AG04450 (cell line): ENCODE measurements at regions of chr9 and their contacts with region 1.

Region 1: DNA sequence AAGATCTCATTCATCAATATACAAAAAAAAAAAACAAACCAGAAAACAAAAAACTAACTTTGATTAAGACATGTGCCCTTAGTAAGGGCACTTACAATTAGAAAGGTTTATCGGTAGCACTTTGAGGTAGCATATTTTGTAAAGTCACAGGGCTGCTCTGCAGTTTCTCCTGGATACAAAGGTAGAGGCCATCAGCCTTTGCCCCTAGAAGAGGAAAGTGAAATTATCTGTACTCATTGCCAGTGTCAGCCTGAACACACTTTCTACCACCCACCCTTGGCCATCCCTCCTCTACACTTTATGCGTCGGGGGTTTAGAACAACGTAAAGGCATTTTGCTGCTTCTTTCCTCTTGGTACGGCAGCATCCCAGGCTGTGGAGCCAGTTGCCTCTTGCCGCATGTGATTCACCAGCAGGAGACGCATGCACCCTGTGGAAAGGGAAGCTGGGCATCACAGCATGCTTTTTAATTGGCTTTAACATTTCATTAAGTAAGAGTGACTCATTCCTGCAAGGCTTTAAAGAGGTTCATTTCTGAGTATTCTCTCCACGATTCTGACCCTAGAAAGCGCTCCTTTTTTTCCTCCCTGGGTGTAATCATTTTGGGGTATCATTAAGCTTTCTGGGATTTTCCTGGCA is 84.6 kb downstream of the CEMIP2 start:
- DNase-seq: no peak
- H3K4me3 ChIP-seq: no peak overlapping the region
- H3K27ac ChIP-seq: no peak overlapping the region
- H3K27me3 ChIP-seq: no peaks in the 10 kb centered on the region
- CTCF ChIP-seq: peak; percentile 40

Region 2: DNA sequence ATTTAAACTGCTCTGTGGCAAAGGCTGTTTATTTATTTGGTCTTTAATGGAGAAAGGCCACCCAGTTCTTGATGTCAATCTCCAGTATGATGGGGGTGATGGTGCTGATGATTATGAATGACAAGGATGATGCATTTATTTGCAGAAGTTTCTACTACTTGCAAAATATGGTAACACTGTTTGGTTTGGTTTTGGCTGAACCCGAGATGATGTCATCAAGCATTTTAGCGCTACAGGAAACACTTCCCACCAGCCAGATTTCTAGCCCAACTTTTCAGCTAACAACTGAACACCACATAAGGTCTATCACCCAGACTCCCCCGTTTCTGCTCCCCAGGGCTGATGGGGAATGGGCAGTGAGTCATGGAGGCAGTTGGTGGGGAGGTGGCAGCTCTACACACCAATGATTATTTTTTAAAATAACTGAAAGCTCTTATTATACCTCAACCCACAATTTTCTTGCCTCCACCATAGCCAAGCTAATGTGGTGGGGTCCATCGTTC is 218.4 kb before region 1 on chr9:
- CTCF ChIA-PET with region 1: no interaction called
- POLR2A ChIA-PET with region 1: no interaction called
- DNase-seq: no peak
- H3K4me3 ChIP-seq: no peak overlapping the region
- H3K27ac ChIP-seq: no peak overlapping the region
- H3K27me3 ChIP-seq: no peaks in the 10 kb centered on the region
- CTCF ChIP-seq: no peak

Region 3: GRCh38 chr9:71571186-71571585 is 112.5 kb before region 1 on chr9:
- CTCF ChIA-PET with region 1: no interaction called
- POLR2A ChIA-PET with region 1: interaction called, 10 read pairs
- DNase-seq: no peak
- H3K4me3 ChIP-seq: no peak overlapping the region
- H3K27ac ChIP-seq: no peak overlapping the region
- H3K27me3 ChIP-seq: no peaks in the 10 kb centered on the region
- CTCF ChIP-seq: no peak

Region 4: DNA sequence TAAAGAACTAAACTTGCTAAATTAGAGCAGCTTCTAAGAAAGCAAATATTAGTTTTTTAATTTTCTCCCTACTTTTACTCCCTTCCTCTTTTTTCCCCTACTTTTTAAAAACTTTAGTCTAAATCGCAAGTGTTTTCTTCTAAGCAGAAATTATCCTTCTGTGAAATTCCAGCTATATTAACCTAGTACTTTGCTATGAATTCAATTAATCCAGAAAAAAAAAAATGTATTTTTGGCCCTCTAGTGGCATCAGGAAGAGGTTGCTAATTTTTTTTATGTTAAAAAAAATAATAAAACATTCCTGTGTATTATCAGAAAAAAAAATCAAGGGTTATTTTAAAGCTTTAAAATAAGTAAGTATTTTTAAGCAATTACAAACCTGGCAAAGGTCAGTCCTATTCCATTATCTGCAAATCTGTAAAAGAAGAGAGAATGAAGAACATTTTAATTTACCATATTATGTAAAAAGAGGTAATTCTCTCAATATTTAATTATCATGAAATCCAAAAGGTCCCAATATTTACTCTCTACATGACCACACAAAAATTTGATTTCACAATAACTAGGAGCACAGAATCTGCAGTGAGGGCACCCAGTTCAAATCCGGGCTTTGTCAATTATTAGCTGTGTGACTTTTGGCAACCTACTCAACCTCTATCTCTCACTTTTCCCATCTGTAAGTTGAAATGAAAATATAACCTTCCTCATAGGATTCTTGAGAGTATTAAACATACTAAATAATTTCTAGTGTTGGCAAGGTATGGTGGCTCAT is 32.6 kb after region 1 on chr9:
- CTCF ChIA-PET with region 1: interaction called, 20 read pairs
- POLR2A ChIA-PET with region 1: no interaction called
- DNase-seq: no peak
- H3K4me3 ChIP-seq: no peak overlapping the region
- H3K27ac ChIP-seq: no peak overlapping the region
- H3K27me3 ChIP-seq: no peaks in the 10 kb centered on the region
- CTCF ChIP-seq: peak; percentile 60